Sigmoid colon (tissue), 7 donors: ENCODE measurements at regions of chr2 and their contacts with region 1.

Region 1: GRCh38 chr2:74482801-74483674 is at the starts of genes CCDC142 and TTC31:
- DNase-seq: peak; percentile 98
- H3K4me3 ChIP-seq: peak within 1 kb of the TSS; percentile 62 to 79 (median 76)
- H3K27ac ChIP-seq: peak within 1 kb of the TSS; percentile 87 to 92 (median 90)
- H3K4me1 ChIP-seq: peaks cover 0 to 33% (median 28%) of the 10 kb centered on the region in 4 donors
- H3K27me3 ChIP-seq: no peaks in the 10 kb centered on the region
- CTCF ChIP-seq: peak; percentile 81 to 91 (median 84)
- EP300 ChIP-seq: no peak
- POLR2A ChIP-seq: peak in 1 of 2 donors; percentile 46
- total RNA-seq, gene CCDC142: 15.8 to 20.9 (median 16.8) TPM
- total RNA-seq, gene TTC31: 18.9 to 29.6 (median 24.1) TPM

Region 2: DNA sequence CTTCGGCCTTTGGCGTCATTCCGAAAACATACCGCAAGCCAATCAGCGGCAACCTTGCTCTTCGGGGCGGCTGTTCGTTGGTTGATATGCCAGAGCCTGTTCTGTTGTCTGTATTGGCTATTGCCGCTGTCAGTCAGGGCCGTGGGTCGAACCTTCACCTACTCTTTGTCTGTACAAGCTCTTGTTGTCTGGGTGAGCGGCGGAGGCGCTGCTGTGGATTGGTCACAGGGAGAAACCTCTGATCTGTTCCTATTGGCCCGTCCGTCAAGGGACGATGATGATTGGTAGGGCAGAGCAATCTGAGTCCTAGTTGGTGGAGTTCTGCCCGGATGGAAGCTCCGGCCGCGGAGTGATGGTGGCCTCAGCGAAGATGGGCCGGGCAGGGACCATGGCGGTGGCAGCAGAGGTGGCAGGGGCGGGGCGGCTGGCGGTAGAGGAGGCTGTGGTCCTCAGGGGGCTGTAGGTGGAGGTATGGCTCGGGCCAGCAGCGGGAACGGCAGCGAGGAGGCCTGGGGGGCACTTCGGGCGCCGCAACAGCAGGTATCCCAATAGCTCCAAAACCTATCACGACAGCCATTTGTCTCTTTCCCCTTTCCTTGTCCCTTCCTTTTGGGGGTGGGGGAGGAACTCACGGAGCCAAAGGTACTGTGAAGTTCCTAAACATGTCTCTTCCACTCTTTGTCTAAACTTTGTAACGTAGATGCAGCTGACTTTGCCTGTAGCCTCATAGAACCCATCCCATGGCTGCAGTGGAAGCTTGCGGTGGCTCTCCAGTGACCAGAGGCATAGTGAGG is 24.7 kb before region 1 on chr2 and contains the start of gene WBP1:
- intact Hi-C with region 1: loop called (anchors 1 kb)
- DNase-seq: peak; percentile 100
- H3K4me3 ChIP-seq: peak within 1 kb of the TSS; percentile 63 to 83 (median 68)
- H3K27ac ChIP-seq: peak within 1 kb of the TSS; percentile 90 to 98 (median 98)
- H3K4me1 ChIP-seq: peaks cover 0 to 40% (median 37%) of the 10 kb centered on the region in 4 donors
- H3K27me3 ChIP-seq: no peaks in the 10 kb centered on the region
- CTCF ChIP-seq: no peak
- EP300 ChIP-seq: no peak
- POLR2A ChIP-seq: peak in 1 of 2 donors; percentile 48
- total RNA-seq, gene WBP1: 63.1 to 89.2 (median 74.1) TPM

Region 3: GRCh38 chr2:74507145-74507925 is 24.3 kb after region 1 on chr2 and contains the start of gene PCGF1:
- intact Hi-C with region 1: loop called (anchors 1 kb)
- DNase-seq: peak; percentile 99
- H3K4me3 ChIP-seq: peak within 1 kb of the TSS; percentile 60 to 87 (median 76)
- H3K27ac ChIP-seq: peak within 1 kb of the TSS; percentile 96 to 99 (median 97)
- H3K4me1 ChIP-seq: peaks cover 0 to 46% (median 37%) of the 10 kb centered on the region in 4 donors
- H3K27me3 ChIP-seq: peaks cover 6 to 75% (median 34%) of the 10 kb centered on the region in 3 donors
- CTCF ChIP-seq: peak in 2 of 4 experiments; percentile 12 to 17
- EP300 ChIP-seq: no peak
- POLR2A ChIP-seq: no peak
- total RNA-seq, gene PCGF1: 8.9 to 22.8 (median 16.0) TPM

Region 4: DNA sequence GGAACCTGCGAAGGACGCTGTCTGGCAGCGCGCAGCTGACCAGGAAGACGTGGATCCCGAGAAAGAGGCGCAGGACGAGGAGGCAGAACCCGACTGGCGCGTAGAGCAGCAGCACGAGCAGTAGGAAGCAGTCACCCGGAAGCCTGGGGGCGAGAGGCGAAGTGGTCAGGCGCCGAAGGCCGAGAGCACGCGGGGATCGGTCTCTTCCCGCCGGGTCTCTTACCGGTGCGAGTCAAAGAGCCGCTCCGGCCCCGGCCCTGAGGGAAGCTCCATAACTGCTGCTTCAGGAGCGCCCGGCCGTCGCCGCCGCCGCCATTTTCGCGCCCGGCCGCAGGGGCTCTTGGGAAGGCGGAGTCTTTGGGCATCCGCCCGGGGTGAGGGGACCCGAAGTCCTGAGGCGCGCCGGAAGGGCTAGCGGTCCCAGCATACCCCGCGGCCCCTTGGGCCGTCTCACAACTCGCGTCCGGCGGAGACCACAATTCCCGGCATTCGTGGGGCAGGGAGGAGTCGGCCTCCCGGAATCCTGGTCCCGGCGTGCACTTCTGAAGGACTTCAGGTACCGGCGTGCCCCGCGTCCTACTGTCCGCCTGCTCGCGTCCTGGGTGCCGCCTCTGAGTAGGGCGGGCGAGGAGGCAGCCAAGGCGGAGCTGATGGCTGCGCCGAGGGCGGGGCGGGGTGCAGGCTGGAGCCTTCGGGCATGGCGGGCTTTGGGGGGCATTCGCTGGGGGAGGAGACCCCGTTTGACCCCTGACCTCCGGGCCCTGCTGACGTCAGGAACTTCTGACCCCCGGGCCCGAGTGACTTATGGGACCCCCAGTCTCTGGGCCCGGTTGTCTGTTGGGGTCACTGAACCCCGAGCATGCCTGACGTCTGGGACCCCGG is 46.6 kb after region 1 on chr2 and contains the starts of genes AUP1 and HTRA2:
- intact Hi-C with region 1: loop called (anchors 1 kb)
- DNase-seq: peak; percentile 99
- H3K4me3 ChIP-seq: peak within 1 kb of the TSS; percentile 72 to 96 (median 84)
- H3K27ac ChIP-seq: peak within 1 kb of the TSS; percentile 84 to 92 (median 89)
- H3K4me1 ChIP-seq: peaks cover 0 to 34% (median 24%) of the 10 kb centered on the region in 4 donors
- H3K27me3 ChIP-seq: no peaks in the 10 kb centered on the region
- CTCF ChIP-seq: no peak
- EP300 ChIP-seq: peak in 2 of 4 donors; percentile 22 to 59
- POLR2A ChIP-seq: peak; percentile 81 to 89
- total RNA-seq, gene AUP1: 76.5 to 133 (median 83.1) TPM
- total RNA-seq, gene HTRA2: 28.2 to 39.3 (median 31.8) TPM

Region 5: DNA sequence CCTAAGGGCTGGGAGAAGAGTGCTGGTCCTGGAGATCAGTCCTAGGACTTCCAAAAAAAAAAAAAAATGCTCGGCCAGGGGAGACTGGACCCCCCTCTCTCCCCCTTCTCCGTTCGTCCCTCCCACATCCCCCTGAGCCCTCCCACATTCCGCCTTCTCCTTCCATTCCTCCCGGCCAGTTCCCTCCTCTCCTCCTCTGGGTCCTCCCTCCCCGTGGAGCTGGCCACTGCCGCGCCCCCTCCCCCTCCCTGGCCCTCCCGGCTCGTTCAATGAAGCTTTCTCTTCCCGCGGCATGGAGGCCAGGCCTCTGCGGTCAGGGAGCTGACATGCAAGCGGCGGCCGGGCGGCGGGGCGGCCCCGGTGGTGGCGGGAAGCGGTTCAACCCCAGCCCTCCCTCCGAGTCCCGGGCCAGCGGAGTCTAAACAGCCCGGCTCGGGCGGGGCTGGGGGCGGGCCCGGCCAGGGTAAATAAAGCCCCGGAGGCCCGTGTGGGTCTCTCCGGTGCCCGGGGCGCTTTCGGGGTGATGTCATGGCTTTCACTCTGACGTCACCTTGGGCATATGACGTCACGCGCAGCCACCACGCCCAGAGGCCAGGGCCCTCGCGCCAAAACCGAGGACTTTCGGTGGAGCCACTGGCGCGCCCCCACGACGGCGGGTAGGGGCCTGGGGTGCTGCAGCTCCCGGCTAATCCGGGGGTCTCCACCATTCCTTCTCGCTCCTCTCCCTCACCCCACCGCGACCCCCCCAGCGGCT is 71.0 kb after region 1 on chr2 and contains the start of gene LOXL3:
- intact Hi-C with region 1: loop called (anchors 2 kb)
- DNase-seq: peak; percentile 94
- H3K4me3 ChIP-seq: peak within 1 kb of the TSS; percentile 57 to 79 (median 68)
- H3K27ac ChIP-seq: peak within 1 kb of the TSS; percentile 88 to 92 (median 89)
- H3K4me1 ChIP-seq: peaks cover 0 to 28% (median 23%) of the 10 kb centered on the region in 4 donors
- H3K27me3 ChIP-seq: no peaks in the 10 kb centered on the region
- CTCF ChIP-seq: no peak
- EP300 ChIP-seq: peak in 1 of 4 donors; percentile 37
- POLR2A ChIP-seq: no peak
- total RNA-seq, gene LOXL3: 5.4 to 7.9 (median 7.8) TPM

Region 6: DNA sequence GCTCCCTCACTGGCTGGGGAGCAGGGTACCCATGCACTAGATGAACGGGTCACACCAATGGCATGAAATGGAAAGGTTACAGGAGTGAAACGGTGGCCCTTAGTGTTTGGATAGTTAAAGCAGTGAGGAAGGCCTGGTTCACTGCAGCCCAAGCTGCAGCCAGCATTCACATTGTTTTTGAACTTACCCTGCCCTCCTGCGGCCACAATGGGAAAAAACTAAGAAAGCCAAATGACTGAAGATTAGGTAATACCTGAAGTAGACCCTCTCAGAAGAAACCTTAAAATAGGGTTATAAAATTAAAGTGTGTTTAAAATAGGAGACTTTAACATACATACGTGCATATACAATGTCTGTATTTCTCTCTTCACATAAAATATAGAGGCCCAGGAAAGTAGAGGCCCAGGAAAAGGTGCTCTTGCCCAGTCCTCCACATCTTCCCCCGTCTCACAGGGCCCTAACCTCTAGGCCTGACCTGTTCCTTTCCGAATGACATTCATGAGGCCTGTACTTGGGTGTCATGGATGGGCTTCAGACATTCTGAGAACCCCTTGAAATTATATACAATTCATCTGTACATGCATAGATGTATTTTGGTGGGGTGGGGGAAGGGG is 104.7 kb after region 1 on chr2:
- intact Hi-C with region 1: loop called (anchors 1 kb)
- DNase-seq: peak; percentile 84
- H3K4me3 ChIP-seq: no peak overlapping the region
- H3K27ac ChIP-seq: no peak overlapping the region
- H3K4me1 ChIP-seq: no peaks in the 10 kb centered on the region
- H3K27me3 ChIP-seq: peaks cover 0 to 11% (median 5%) of the 10 kb centered on the region in 3 donors
- CTCF ChIP-seq: peak in 3 of 4 experiments; percentile 65 to 71 (median 67)
- EP300 ChIP-seq: no peak
- POLR2A ChIP-seq: no peak